Aorta (tissue), 5 donors: ENCODE measurements at regions of chr15 and their contacts with region 1.

Region 1: GRCh38 chr15:90954712-90955671 is at the start of gene RCCD1:
- DNase-seq: peak; percentile 98
- ATAC-seq: peak; percentile 95
- H3K4me3 ChIP-seq: peak within 1 kb of the TSS; percentile 24 to 90
- H3K27ac ChIP-seq: peak within 1 kb of the TSS in 1 of 2 donors; percentile 78
- H3K4me1 ChIP-seq: no peaks in the 10 kb centered on the region
- H3K27me3 ChIP-seq: no peaks in the 10 kb centered on the region
- total RNA-seq, gene RCCD1: 5.9 to 12.3 TPM

Region 2: DNA sequence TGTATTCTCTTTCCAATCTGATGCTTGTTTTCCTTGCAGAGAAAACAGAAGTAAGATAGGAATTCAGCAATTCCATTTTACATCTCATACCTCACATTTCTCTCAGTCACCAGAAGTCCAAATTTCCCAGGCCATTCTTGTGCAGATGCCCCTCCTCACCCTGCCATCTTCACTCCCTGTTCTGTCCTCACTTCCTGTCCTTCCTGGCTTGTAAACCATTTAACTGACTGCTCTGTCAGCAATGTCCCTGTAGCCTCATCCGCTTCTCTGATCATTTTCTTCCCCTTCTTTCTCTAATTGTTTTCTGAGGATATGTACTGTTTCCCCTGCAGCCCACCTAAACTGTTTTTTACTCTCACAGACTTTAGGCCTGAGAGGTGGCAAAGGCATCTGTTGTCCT is 197.5 kb before region 1 on chr15:
- intact Hi-C with region 1: no loop called
- DNase-seq: no peak
- ATAC-seq: no peak
- H3K4me3 ChIP-seq: no peak overlapping the region
- H3K27ac ChIP-seq: no peak overlapping the region
- H3K4me1 ChIP-seq: peaks cover 0 to 2% of the 10 kb centered on the region in 2 donors
- H3K27me3 ChIP-seq: no peaks in the 10 kb centered on the region

Region 3: GRCh38 chr15:90931737-90932659 is 23.0 kb before region 1 on chr15 and contains the start of gene HDDC3:
- intact Hi-C with region 1: loop called in 1 of 2 experiments (anchors 1 kb)
- DNase-seq: peak; percentile 94 to 98
- ATAC-seq: peak; percentile 83
- H3K4me3 ChIP-seq: peak within 1 kb of the TSS; percentile 42 to 60
- H3K27ac ChIP-seq: peak within 1 kb of the TSS in 1 of 2 donors; percentile 55
- H3K4me1 ChIP-seq: peaks cover 0 to 6% of the 10 kb centered on the region in 2 donors
- H3K27me3 ChIP-seq: no peaks in the 10 kb centered on the region
- total RNA-seq, gene HDDC3: 7.3 to 7.7 TPM

Region 4: DNA sequence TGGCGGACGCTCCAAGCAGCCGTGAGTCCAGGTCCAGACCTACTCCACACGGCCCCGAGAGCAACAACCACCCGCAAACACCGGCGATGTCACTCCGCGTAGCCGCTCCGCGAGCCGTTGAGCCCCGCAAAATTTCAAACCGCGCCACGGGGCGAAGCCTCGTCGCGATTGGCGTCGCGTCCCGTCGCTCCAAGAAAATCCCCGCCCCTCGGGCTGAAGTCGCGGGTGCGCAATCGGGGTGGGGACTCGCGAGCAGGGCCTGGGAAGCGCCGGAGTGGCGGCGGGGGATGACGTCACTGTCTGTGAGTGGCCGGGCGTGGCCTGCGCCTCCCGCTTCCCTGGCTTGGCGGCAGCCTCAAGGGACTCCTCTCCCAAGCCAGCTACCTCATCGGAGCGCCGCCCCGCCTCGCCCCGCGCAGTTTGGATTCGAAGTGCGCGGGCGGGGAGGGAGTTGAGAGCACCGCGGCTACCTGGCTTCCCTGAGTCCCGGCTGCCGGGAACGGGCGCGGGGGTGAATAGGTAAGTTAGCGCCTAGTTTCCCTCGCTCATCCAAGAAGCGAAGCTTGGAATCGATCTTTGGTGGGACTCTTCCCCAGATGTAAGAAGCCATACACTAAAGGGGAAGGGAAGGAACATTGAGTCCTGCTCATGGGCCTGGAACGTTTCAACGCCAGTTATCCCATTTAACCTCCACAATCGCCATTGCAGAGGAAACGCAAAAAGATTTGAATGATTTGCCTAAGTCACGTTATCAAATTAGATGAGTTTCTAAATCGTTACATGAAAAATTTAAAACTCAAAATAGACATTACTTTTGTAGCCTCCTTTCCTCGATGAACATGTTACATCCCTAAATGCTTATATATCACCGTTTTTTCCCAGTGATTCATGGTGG is 39.7 kb after region 1 on chr15 and contains the start of gene PRC1:
- intact Hi-C with region 1: loop called (anchors 2 to 5 kb)
- DNase-seq: peak; percentile 99
- ATAC-seq: peak; percentile 100
- H3K4me3 ChIP-seq: peak within 1 kb of the TSS; percentile 50 to 63
- H3K27ac ChIP-seq: peak within 1 kb of the TSS; percentile 36 to 77
- H3K4me1 ChIP-seq: no peaks in the 10 kb centered on the region
- H3K27me3 ChIP-seq: no peaks in the 10 kb centered on the region
- total RNA-seq, gene PRC1: 7.7 to 8.1 TPM

Region 5: DNA sequence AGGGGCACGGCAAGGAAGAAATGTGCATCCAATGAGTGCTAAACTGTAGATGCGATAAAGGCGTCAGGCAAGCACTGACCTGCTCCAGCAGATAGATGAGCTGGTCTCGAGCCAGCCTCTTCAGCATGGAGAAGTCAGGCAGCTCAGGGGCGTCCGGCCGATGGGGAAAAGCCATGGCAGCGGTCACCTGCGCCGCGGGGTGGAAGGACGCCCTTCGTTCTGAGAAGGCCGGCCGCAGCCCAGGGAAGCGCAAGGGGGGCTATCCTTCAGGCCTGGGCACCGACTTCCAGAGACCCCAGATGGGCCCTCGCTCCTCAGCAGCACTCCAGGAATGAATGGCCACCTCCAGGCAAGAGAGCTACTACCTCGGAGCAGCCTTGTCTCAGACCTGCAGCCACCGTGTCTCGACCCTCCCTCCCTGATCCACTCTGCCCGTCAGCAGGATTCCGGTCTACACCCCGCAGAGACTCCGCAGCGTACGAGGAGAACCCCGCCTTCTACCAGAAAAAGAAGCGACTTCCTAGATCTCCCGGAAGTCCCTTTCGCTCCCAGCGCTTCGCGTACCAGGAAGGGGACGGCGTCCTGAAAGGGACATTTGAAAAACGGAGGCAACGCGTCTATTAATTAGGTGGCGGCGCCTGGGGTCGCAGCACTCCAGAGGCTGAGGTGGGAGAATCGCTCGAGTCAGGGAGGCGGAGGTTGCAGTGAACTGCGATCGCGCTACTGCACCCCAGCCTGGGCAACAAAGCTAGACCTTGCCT is 67.3 kb after region 1 on chr15 and contains the start of gene VPS33B:
- intact Hi-C with region 1: loop called in 1 of 2 experiments (anchors 10 kb)
- DNase-seq: peak; percentile 90 to 91
- ATAC-seq: peak; percentile 92
- H3K4me3 ChIP-seq: peak within 1 kb of the TSS; percentile 75 to 85
- H3K27ac ChIP-seq: no peak within 1 kb of the TSS
- H3K4me1 ChIP-seq: no peaks in the 10 kb centered on the region
- H3K27me3 ChIP-seq: no peaks in the 10 kb centered on the region
- total RNA-seq, gene VPS33B: 13.4 to 14.3 TPM

Region 6: GRCh38 chr15:91032919-91033803 is 78.2 kb after region 1 on chr15:
- intact Hi-C with region 1: loop called (anchors 10 kb)
- DNase-seq: peak in 1 of 2 donors; percentile 56
- ATAC-seq: no peak
- H3K4me3 ChIP-seq: no peak overlapping the region
- H3K27ac ChIP-seq: no peak overlapping the region
- H3K4me1 ChIP-seq: no peaks in the 10 kb centered on the region
- H3K27me3 ChIP-seq: no peaks in the 10 kb centered on the region

Region 7: GRCh38 chr15:91049378-91050127 is 94.6 kb after region 1 on chr15:
- intact Hi-C with region 1: loop called (anchors 2 to 5 kb)
- DNase-seq: no peak
- ATAC-seq: peak; percentile 75
- H3K4me3 ChIP-seq: no peak overlapping the region
- H3K27ac ChIP-seq: no peak overlapping the region
- H3K4me1 ChIP-seq: no peaks in the 10 kb centered on the region
- H3K27me3 ChIP-seq: no peaks in the 10 kb centered on the region

Region 8: GRCh38 chr15:91271565-91272153 is 316.7 kb after region 1 on chr15:
- intact Hi-C with region 1: loop called (anchors 5 to 10 kb)
- DNase-seq: no peak
- ATAC-seq: peak; percentile 87
- H3K4me3 ChIP-seq: no peak overlapping the region
- H3K27ac ChIP-seq: no peak overlapping the region
- H3K4me1 ChIP-seq: no peaks in the 10 kb centered on the region
- H3K27me3 ChIP-seq: no peaks in the 10 kb centered on the region